PC-3 (cell line): ENCODE measurements at regions of chr18 and their contacts with region 1.

Region 1: DNA sequence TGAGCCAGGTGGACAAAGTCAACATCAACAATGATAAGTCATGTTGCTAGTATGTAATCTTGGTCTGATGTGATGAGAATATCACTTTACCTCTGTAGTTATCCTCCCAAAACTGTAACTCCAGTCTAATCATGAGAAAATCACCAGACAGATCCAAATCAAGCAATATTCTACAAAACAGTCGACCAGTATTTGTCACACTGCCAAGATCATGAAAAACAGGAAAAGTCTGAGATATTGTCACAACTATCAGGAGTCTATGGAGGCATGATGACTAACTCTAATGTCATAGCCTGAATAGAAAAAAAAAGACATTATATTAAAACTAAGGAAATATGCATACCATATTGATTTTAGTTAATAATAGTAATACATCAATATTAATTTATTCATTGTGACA is 1883.3 kb upstream of the CELF4 start:
- DNase-seq: peak; percentile 60
- ATAC-seq: peak; percentile 35
- H3K4me3 ChIP-seq: no peak overlapping the region
- H3K27ac ChIP-seq: peak overlapping the region; percentile 48; the same call in 1 of the 2 replicates
- H3K4me1 ChIP-seq: peaks cover 3% of the 10 kb centered on the region; the same call in 1 of the 2 replicates
- H3K27me3 ChIP-seq: no peaks in the 10 kb centered on the region
- CTCF ChIP-seq: no peak

Region 2: GRCh38 chr18:39414009-39414700 is 34.8 kb before region 1 on chr18:
- CTCF ChIA-PET with region 1: no interaction called
- POLR2A ChIA-PET with region 1: no interaction called
- intact Hi-C with region 1: loop called (anchors 2 kb)
- DNase-seq: peak; percentile 58
- ATAC-seq: peak; percentile 96
- H3K4me3 ChIP-seq: no peak overlapping the region
- H3K27ac ChIP-seq: no peak overlapping the region
- H3K4me1 ChIP-seq: peaks cover 3% of the 10 kb centered on the region; the same call in 1 of the 2 replicates
- H3K27me3 ChIP-seq: no peaks in the 10 kb centered on the region
- CTCF ChIP-seq: no peak